Breast epithelium (tissue), 4 donors: ENCODE measurements at regions of chr6 and their contacts with region 1.

Region 1: GRCh38 chr6:166325383-166326042 is 16.8 kb downstream of the SFT2D1 start:
- DNase-seq: no peak
- H3K4me3 ChIP-seq: no peak overlapping the region
- H3K27ac ChIP-seq: no peak overlapping the region
- H3K4me1 ChIP-seq: no peaks in the 10 kb centered on the region
- H3K27me3 ChIP-seq: no peaks in the 10 kb centered on the region
- CTCF ChIP-seq: no peak
- POLR2A ChIP-seq: no peak

Region 2: DNA sequence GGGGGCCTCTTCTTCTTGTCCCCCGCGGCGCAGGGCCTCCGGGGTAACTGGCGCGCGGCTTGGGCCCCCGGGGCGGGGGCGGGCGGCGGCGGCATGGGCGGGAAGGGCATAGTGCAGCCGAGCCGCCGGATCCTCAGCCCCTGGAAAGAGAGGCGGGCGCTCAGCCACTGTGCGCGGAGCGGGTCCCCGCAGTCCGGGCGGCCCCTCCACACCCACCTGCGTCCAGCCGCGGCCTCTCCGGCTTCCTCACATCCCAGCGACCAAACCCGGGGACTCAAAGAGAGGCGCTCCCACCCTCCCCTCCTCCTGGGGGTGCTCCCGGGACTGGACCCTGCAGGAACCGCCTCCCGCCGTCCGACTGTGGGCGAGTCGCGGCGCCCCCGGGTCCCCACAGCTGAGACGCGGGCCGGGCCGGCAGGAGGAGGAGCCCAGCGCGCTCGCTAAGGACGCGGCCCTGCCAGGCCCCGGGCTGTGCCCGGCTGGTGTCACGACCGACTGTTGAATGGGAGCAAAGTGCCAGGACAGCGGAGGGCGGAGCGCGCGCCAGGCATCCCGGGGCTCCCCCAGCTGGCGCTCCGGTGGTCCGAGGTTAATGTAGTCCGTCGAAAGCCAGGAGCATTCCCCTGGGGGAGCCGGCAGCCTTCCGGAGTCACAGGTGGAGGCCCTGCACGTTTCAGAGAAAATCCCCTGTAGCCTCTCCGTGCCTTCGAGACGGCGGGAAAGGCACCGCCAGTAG is 17.3 kb before region 1 on chr6 and contains the start of gene PRR18:
- intact Hi-C with region 1: loop called (anchors 2 kb)
- DNase-seq: no peak
- H3K4me3 ChIP-seq: peak within 1 kb of the TSS; percentile 35 to 75 (median 50)
- H3K27ac ChIP-seq: no peak within 1 kb of the TSS
- H3K4me1 ChIP-seq: peaks cover 0 to 7% of the 10 kb centered on the region in 2 donors
- H3K27me3 ChIP-seq: peaks cover 9 to 22% of the 10 kb centered on the region in 2 donors
- CTCF ChIP-seq: no peak
- POLR2A ChIP-seq: no peak
- total RNA-seq, gene PRR18: 0.29 TPM in 1 of 3 donors, not detected in the others

Region 3: DNA sequence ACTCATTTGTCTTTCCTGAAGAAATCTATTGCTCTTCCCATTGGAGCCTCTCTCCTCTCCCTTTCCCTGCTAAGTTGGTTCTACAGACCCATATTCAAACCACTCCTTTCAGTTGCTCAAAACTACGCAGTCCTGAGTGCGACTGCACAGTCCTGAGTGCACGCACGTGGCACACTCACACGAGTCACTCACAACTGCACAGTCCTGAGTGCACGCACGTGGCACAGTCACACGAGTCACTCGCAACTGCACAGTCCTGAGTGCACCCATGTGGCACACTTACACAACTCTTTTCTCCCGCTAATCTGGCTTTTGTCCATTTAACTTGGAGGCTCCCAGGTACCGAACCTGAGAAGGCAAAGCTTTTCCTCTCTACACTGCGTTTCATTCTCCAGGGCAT is 471.1 kb after region 1 on chr6:
- intact Hi-C with region 1: no loop called
- DNase-seq: no peak
- H3K4me3 ChIP-seq: no peak overlapping the region
- H3K27ac ChIP-seq: no peak overlapping the region
- H3K4me1 ChIP-seq: no peaks in the 10 kb centered on the region
- H3K27me3 ChIP-seq: no peaks in the 10 kb centered on the region
- CTCF ChIP-seq: no peak
- POLR2A ChIP-seq: no peak